Caco-2 (cell line): ENCODE measurements at regions of chr4 and their contacts with region 1.

Region 1: GRCh38 chr4:109998867-109999584 is 86.3 kb downstream of the EGF start:
- DNase-seq: peak in 1 of 2 experiments; percentile 69
- H3K4me3 ChIP-seq: no peak overlapping the region
- H3K4me3 Mint-ChIP-seq: no peak overlapping the region
- H3K27ac Mint-ChIP-seq: no peak overlapping the region
- H3K4me1 ChIP-seq: peaks cover 6% of the 10 kb centered on the region
- H3K4me1 Mint-ChIP-seq: no peaks in the 10 kb centered on the region
- H3K27me3 ChIP-seq: no peaks in the 10 kb centered on the region
- H3K27me3 Mint-ChIP-seq: peaks cover 2% of the 10 kb centered on the region
- CTCF ChIP-seq: peak; percentile 44 to 73

Region 2: GRCh38 chr4:110310795-110311194 is 311.8 kb after region 1 on chr4:
- CTCF ChIA-PET with region 1: no interaction called
- POLR2A ChIA-PET with region 1: no interaction called
- intact Hi-C with region 1: loop called (anchors 10 kb)
- DNase-seq: no peak
- H3K4me3 ChIP-seq: no peak overlapping the region
- H3K4me3 Mint-ChIP-seq: no peak overlapping the region
- H3K27ac Mint-ChIP-seq: no peak overlapping the region
- H3K4me1 ChIP-seq: no peaks in the 10 kb centered on the region
- H3K4me1 Mint-ChIP-seq: no peaks in the 10 kb centered on the region
- H3K27me3 ChIP-seq: no peaks in the 10 kb centered on the region; the same call in 1 of the 2 replicates
- H3K27me3 Mint-ChIP-seq: peaks cover 8% of the 10 kb centered on the region
- CTCF ChIP-seq: no peak

Region 3: GRCh38 chr4:110510955-110511544 is 512.0 kb after region 1 on chr4:
- CTCF ChIA-PET with region 1: interaction called, 9 read pairs
- POLR2A ChIA-PET with region 1: no interaction called
- intact Hi-C with region 1: loop called (anchors 1 kb)
- DNase-seq: peak in 1 of 2 experiments; percentile 38
- H3K4me3 ChIP-seq: no peak overlapping the region
- H3K4me3 Mint-ChIP-seq: no peak overlapping the region
- H3K27ac Mint-ChIP-seq: no peak overlapping the region
- H3K4me1 ChIP-seq: no peaks in the 10 kb centered on the region
- H3K4me1 Mint-ChIP-seq: no peaks in the 10 kb centered on the region
- H3K27me3 ChIP-seq: no peaks in the 10 kb centered on the region
- H3K27me3 Mint-ChIP-seq: no peaks in the 10 kb centered on the region
- CTCF ChIP-seq: peak; percentile 56 to 60

Region 4: GRCh38 chr4:110516106-110516922 is 517.3 kb after region 1 on chr4:
- CTCF ChIA-PET with region 1: interaction called, 5 read pairs
- POLR2A ChIA-PET with region 1: no interaction called
- intact Hi-C with region 1: loop called (anchors 1 kb)
- DNase-seq: peak; percentile 78
- H3K4me3 ChIP-seq: no peak overlapping the region
- H3K4me3 Mint-ChIP-seq: peak overlapping the region; percentile 64
- H3K27ac Mint-ChIP-seq: no peak overlapping the region
- H3K4me1 ChIP-seq: no peaks in the 10 kb centered on the region
- H3K4me1 Mint-ChIP-seq: no peaks in the 10 kb centered on the region
- H3K27me3 ChIP-seq: no peaks in the 10 kb centered on the region
- H3K27me3 Mint-ChIP-seq: no peaks in the 10 kb centered on the region
- CTCF ChIP-seq: peak; percentile 78 to 82

Region 5: DNA sequence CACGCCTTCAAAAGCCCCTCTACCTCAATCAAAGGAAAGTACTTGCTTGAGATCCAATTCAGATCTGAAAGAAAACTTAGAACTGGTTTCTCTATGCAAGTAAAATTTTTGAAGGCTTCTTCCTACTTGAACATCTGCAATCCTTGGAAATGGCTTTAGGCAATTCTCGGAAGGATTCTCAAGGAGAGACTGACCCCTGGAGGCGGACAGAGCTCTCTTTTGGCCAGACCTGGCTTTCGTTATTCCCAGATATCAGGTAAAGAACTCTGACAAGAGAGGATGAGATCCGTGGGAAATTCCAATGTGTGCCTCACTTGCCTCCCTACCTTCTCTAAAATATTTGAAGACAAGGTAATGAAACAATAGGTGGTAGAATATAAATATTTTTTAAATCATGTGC is 1476.0 kb after region 1 on chr4:
- CTCF ChIA-PET with region 1: no interaction called
- POLR2A ChIA-PET with region 1: no interaction called
- intact Hi-C with region 1: loop called (anchors 10 kb)
- DNase-seq: peak; percentile 50 to 62
- H3K4me3 ChIP-seq: no peak overlapping the region
- H3K4me3 Mint-ChIP-seq: no peak overlapping the region
- H3K27ac Mint-ChIP-seq: no peak overlapping the region
- H3K4me1 ChIP-seq: no peaks in the 10 kb centered on the region
- H3K4me1 Mint-ChIP-seq: no peaks in the 10 kb centered on the region
- H3K27me3 ChIP-seq: no peaks in the 10 kb centered on the region
- H3K27me3 Mint-ChIP-seq: no peaks in the 10 kb centered on the region
- CTCF ChIP-seq: peak; percentile 64 to 68

Region 6: DNA sequence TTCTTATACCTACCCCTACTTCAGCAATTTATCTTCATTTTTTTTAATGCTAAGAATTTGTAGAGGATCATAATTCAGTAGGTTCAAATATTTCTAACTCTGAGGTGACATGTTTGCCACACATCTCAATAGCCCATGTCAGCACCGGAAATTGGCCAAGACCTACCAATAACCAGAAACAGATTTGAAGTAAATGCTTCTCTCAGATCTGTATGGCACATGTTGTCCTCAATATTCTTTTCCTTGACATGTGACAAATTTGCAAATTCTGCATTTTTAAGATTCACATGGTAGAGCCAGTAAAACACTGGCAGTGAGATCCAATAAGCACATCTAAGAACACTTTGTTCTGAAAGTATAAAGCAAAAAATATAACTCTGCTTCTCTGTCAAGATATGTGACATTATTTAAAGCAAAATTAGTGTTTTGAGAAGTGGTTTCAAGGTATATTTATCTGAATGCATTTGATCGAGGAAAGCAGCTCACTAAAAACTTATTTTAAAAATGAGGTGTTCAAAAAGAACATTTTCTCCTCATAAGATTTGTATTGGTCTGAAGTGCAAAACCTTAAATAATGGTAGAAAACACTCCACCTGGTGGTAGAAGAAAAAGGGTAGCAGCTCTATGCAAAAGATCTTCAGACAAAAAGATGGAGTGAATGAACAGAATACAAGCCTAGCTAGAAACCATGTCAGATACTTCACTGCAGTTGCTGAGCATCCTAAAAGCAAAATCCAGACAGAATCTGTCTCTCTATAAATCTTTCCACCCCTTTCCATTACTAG is 1632.4 kb after region 1 on chr4:
- CTCF ChIA-PET with region 1: interaction called, 4 read pairs
- POLR2A ChIA-PET with region 1: no interaction called
- intact Hi-C with region 1: loop called (anchors 2 kb)
- DNase-seq: peak in 1 of 2 experiments; percentile 7
- H3K4me3 ChIP-seq: no peak overlapping the region
- H3K4me3 Mint-ChIP-seq: no peak overlapping the region
- H3K27ac Mint-ChIP-seq: no peak overlapping the region
- H3K4me1 ChIP-seq: no peaks in the 10 kb centered on the region
- H3K4me1 Mint-ChIP-seq: peaks cover under 1% of the 10 kb centered on the region
- H3K27me3 ChIP-seq: no peaks in the 10 kb centered on the region
- H3K27me3 Mint-ChIP-seq: peaks cover 9% of the 10 kb centered on the region
- CTCF ChIP-seq: peak; percentile 12 to 63